PC-9 (cell line): ENCODE measurements at regions of chr1 and their contacts with region 1.

Region 1: DNA sequence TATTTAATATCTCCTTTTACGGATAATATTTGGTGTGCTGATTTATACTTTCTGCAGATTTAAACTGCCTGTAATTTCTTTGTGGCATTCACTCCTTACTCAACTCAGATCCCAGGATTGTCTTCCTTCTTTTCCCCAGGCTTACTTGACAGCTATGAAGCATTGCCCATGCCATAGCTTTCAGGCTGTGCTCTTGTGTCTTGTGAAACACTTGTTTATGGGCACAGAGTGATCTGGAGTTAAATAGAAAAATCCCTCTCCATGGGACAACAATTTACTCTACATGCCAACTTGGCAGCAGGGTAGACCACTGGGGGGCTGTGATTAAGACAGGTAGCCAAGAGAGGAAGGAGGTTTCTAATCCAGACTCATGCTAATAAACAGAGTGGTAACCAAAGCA is 57.4 kb downstream of the PPP1R12B start:
- DNase-seq: no peak
- H3K4me3 ChIP-seq: no peak overlapping the region
- H3K27ac ChIP-seq: peak overlapping the region; percentile 20; the same call in 1 of the 2 replicates
- H3K4me1 ChIP-seq: peaks cover 44% of the 10 kb centered on the region
- H3K27me3 ChIP-seq: no peaks in the 10 kb centered on the region
- CTCF ChIP-seq: no peak

Region 2: DNA sequence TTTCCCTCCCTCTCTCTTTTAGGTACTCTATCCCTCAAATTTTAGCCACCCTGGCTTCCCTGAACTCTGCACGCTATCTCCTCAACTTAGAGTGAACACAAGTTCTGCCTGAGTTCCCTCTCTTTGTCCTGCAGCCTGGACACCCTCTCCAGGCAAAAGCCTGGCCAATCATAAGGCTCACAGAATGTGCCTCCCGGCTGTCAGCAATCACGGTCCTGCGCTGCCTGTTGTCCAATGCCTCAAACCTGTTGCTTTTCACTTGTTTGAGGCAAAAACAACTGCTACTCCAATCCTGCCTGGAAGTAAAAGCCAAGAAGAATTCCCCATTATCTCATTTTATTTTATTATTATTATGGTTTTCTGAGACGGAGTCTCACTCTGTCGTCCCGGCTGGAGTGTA is 146.2 kb before region 1 on chr1:
- CTCF ChIA-PET with region 1: interaction called, 16 read pairs
- POLR2A ChIA-PET with region 1: no interaction called
- intact Hi-C with region 1: no loop called
- DNase-seq: no peak
- H3K4me3 ChIP-seq: no peak overlapping the region
- H3K27ac ChIP-seq: no peak overlapping the region
- H3K4me1 ChIP-seq: no peaks in the 10 kb centered on the region
- H3K27me3 ChIP-seq: peaks cover 33% of the 10 kb centered on the region
- CTCF ChIP-seq: no peak

Region 3: GRCh38 chr1:202807926-202808757 is 402.2 kb after region 1 on chr1 and contains the start of gene KDM5B:
- CTCF ChIA-PET with region 1: no interaction called
- POLR2A ChIA-PET with region 1: no interaction called
- intact Hi-C with region 1: no loop called
- DNase-seq: peak; percentile 61 to 64
- H3K4me3 ChIP-seq: peak within 1 kb of the TSS; percentile 95
- H3K27ac ChIP-seq: peak within 1 kb of the TSS; percentile 78
- H3K4me1 ChIP-seq: peaks cover 62% of the 10 kb centered on the region
- H3K27me3 ChIP-seq: no peaks in the 10 kb centered on the region
- CTCF ChIP-seq: no peak
- total RNA-seq, gene KDM5B: 99.8 and 110 TPM in 2 replicates